Activated B cell treated with CpG ODN at 0.5 μM for 24 hours (primary cell): ENCODE measurements at regions of chr3 and their contacts with region 1.

Region 1: DNA sequence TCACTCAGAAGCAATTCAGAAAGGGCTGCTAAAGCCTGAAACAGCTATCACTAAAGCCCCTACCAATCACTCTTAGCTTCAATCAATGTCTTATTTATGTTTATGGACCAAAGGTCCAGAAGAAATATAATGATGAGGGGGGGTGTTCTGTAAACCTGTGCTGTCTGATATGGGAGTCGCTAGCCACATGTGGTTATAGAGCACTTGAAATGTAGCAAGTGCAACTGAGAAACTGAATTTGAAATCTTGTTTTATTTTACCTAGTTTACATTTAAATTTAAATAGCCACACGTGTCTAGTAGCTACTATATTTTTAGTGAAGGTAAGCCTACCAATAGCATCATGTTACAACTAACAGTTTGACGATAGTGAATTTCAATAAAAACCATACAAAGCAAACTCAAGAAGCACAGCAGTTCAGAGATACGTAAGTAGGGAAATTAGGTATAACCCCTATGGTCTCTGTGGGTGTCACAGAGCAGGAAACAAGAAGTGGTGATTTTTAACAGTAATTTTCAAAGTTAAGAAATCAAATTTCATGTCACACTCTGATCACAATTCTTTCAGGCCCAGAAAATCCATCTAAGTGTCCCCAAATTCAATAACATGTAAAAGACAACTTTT is 3.6 kb downstream of the POU1F1 start:
- DNase-seq: no peak
- ATAC-seq: peak; percentile 82
- H3K4me3 Mint-ChIP-seq: no peak overlapping the region
- H3K27ac Mint-ChIP-seq: no peak overlapping the region
- H3K4me1 Mint-ChIP-seq: peaks cover 25% of the 10 kb centered on the region
- H3K27me3 Mint-ChIP-seq: no peaks in the 10 kb centered on the region
- CTCF ChIP-seq: no peak

Region 2: DNA sequence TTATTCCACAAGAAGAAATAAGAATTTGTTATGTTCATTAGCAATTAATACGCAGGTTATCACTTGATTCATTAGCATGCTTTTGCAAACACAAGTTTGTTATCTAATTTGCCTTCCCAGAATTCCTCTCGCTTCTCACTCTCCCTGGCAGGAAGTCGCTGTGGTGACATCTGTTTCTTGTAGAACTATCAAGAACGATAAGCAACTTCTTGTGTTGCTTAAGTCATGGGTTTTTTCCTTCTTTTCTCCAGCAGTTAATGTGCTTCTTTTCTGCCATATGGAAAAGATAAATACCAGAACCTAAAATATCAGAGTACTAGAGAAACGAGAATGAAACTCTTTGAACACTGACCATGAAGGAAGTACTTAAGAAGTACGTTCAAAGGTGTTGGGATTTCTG is 145.5 kb before region 1 on chr3:
- CTCF ChIA-PET with region 1: no interaction called
- POLR2A ChIA-PET with region 1: no interaction called
- intact Hi-C with region 1: no loop called
- DNase-seq: no peak
- ATAC-seq: no peak
- H3K4me3 Mint-ChIP-seq: no peak overlapping the region
- H3K27ac Mint-ChIP-seq: no peak overlapping the region
- H3K4me1 Mint-ChIP-seq: no peaks in the 10 kb centered on the region
- H3K27me3 Mint-ChIP-seq: no peaks in the 10 kb centered on the region
- CTCF ChIP-seq: no peak

Region 3: DNA sequence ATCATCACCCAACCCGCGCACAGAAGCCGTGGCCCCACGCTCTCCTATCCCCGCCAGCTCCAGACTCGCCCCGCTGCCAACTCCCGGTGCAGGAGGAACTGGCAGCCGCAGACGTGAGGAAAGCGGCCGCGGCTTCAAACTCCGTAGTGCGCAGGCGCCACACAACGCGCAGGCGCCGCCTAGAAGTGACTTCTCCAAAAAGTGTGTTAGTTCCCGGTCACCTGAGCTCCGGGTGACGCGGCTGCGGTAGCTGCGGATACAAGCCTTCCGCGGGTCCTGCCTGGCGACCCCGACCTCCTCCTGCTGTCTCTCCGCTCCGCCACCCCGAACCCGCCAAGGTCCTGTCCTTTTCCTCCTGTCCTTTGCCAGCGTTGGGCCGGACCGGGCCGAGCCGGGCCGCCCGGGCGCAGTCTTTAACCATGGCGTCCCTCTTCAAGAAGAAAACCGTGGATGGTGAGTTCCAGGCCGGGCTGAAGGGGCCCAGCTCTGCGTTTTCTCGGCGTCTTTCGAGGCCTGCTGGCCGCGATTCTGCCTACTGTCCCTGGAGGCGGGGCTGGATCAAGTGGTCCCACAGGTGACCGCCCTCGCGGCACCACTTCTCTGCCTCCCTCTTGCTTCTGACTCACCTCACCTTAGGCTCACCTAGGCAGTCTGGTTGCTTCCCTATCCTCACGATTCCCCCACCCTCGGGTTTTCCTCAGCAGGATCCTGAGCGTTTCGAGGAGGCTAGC is 45.6 kb before region 1 on chr3 and contains the start of gene CHMP2B:
- CTCF ChIA-PET with region 1: no interaction called
- POLR2A ChIA-PET with region 1: no interaction called
- intact Hi-C with region 1: loop called (anchors 2 kb)
- DNase-seq: peak; percentile 92
- ATAC-seq: peak; percentile 90
- H3K4me3 Mint-ChIP-seq: peak within 1 kb of the TSS; percentile 99
- H3K27ac Mint-ChIP-seq: peak within 1 kb of the TSS; percentile 97
- H3K4me1 Mint-ChIP-seq: peaks cover 49% of the 10 kb centered on the region
- H3K27me3 Mint-ChIP-seq: peaks cover 7% of the 10 kb centered on the region
- CTCF ChIP-seq: no peak
- total RNA-seq, gene CHMP2B: 21.7 and 26.8 TPM in 2 replicates